ENCODE measurements at regions of chr4 and their contacts with region 1.

Region 1: DNA sequence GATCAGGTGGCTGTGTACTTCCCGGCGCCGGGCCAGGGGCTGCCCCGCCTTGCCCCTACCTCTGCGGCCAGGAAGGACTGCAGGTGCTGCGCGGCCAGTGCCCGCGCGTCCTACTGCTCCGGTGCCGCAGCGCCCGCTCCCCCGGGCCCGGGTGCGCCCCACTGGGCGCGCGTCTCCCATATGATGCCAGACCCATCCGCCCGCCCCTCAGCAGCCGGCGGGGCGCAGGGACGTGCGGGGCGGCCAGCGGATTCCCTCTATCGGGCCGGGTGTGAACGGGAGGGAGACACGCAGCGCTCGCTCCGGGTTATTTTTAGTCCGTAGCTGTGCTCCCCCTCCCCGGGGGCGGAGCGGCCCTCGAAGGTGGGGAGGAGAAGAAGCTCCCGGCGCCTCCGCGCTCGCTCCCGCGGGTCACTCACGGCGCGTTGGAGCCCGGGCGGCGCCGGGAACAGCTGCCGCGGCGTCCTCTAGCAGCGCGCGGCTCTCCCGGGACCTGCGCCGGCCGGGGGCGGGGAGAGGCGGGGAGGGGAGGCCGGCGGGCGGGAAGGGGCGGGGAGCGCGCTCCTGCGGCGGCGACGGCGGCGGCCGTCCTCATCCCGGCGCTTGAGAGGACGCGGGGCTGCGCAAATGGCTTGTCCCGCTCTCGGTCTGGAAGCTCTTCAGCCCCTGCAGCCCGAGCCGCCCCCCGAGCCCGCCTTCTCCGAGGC is 103.6 kb downstream of the UCHL1 start:
- DNase-seq: peak; percentile 91
- ATAC-seq: peak; percentile 87
- H3K4me3 ChIP-seq: peak overlapping the region; percentile 77
- H3K27ac ChIP-seq: peak overlapping the region; percentile 86
- H3K4me1 ChIP-seq: peaks cover 18% of the 10 kb centered on the region
- H3K27me3 ChIP-seq: no peaks in the 10 kb centered on the region
- CTCF ChIP-seq: no peak

Region 2: GRCh38 chr4:41480896-41481311 is 120.5 kb after region 1 on chr4:
- intact Hi-C with region 1: loop called (anchors 5 kb)
- DNase-seq: no peak
- ATAC-seq: no peak
- H3K4me3 ChIP-seq: no peak overlapping the region
- H3K27ac ChIP-seq: no peak overlapping the region
- H3K4me1 ChIP-seq: peaks cover 17% of the 10 kb centered on the region
- H3K27me3 ChIP-seq: no peaks in the 10 kb centered on the region
- CTCF ChIP-seq: no peak

Region 3: GRCh38 chr4:41865306-41865980 is 505.1 kb after region 1 on chr4:
- intact Hi-C with region 1: no loop called
- DNase-seq: peak; percentile 66
- ATAC-seq: peak; percentile 62
- H3K4me3 ChIP-seq: no peak overlapping the region
- H3K27ac ChIP-seq: no peak overlapping the region
- H3K4me1 ChIP-seq: no peaks in the 10 kb centered on the region
- H3K27me3 ChIP-seq: peaks cover 68% of the 10 kb centered on the region
- CTCF ChIP-seq: no peak